Panc1 (cell line): ENCODE measurements at regions of chr19 and their contacts with region 1.

Region 1: DNA sequence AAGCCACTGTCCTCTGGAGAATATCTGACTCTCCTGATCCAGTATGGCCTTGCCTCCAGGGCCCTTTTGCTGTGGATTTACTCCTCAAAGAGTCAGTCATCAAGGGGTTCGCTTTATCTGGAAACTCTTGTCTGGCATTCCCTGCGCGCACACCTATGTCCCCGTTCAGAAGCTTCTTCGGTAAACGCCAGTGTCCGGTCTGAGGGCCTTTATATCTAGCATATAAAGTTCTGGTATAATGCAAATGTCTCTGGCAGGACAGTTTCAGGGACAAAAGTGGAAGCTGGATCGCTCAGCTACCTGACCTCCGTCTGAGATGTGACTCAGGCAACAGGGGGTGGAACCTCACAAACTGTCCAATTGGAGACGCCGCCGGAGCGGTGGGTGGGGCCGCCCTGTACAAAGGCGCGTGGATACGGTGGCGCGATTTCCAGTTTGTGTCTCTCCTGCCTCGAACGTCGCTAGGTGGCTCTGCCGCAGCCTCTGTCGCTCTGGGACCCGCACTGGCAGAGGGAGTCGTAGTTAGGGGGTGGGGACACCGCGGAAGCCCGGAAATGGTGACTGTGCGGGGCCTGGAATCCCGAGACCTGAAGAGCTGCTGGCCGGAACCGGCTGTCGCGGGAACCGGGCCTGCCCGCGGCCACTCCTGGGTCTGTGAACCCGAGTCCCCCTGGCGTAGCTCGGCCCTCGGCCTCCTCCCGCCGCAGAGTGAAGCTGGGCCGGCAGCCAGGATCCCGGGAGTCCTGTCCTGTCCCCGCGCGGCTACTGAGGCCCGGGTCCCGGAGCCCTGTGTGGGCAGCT is 10.6 kb upstream of the ZNF709 start:
- DNase-seq: peak; percentile 82
- ATAC-seq: peak; percentile 100
- H3K4me3 ChIP-seq: peak overlapping the region; percentile 61 to 68
- H3K27ac ChIP-seq: peak overlapping the region; percentile 81
- H3K4me1 ChIP-seq: peaks cover 3% of the 10 kb centered on the region; the same call in 1 of the 2 replicates
- H3K27me3 ChIP-seq: no peaks in the 10 kb centered on the region
- CTCF ChIP-seq: peak; percentile 71; the same call in 1 of the 2 replicates

Region 2: GRCh38 chr19:12745166-12745897 is 250.1 kb after region 1 on chr19:
- CTCF ChIA-PET with region 1: interaction called, 11 read pairs
- POLR2A ChIA-PET with region 1: no interaction called
- in situ Hi-C with region 1: no loop called
- intact Hi-C with region 1: no loop called
- DNase-seq: no peak
- ATAC-seq: no peak
- H3K4me3 ChIP-seq: no peak overlapping the region
- H3K27ac ChIP-seq: no peak overlapping the region
- H3K4me1 ChIP-seq: peaks cover 4% of the 10 kb centered on the region
- H3K27me3 ChIP-seq: no peaks in the 10 kb centered on the region
- CTCF ChIP-seq: no peak